Esophagus squamous epithelium (tissue), 5 donors: ENCODE measurements at regions of chr2 and their contacts with region 1.

Region 1: DNA sequence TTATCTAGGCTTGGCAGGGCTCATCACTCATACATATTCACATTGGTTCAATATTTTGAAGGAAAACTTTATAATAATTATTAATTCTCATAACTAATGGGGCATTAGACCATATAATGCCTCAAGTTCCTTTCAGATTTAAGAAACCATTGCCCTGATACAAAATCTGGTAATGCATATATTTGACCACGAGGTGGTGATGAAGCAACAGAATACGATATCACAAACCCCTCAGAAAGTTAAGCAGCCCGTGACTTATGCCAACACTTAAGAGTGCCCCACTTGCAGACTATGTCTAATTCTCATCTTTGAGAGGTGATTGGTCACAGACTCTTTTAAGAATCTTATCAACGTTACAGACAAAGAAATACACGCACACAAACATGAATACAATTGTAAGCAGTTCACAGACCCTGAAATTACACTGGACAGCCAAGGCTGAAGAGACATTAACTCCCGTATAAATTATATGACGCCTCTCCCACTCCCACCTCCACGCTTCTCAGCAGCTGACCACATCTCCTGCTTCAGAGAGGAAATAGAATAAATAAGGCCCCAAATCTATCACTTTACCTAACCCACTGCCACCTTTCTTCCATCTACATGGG is 20.7 kb upstream of the DNAH6 start:
- DNase-seq: no peak
- H3K4me3 ChIP-seq: no peak overlapping the region
- H3K27ac ChIP-seq: no peak overlapping the region
- H3K4me1 ChIP-seq: no peaks in the 10 kb centered on the region
- H3K27me3 ChIP-seq: no peaks in the 10 kb centered on the region
- CTCF ChIP-seq: peak; percentile 48 to 78 (median 56)
- POLR2A ChIP-seq: no peak

Region 2: GRCh38 chr2:83887757-83888156 is 607.9 kb before region 1 on chr2:
- intact Hi-C with region 1: no loop called
- DNase-seq: no peak
- H3K4me3 ChIP-seq: no peak overlapping the region
- H3K27ac ChIP-seq: no peak overlapping the region
- H3K4me1 ChIP-seq: no peaks in the 10 kb centered on the region
- H3K27me3 ChIP-seq: no peaks in the 10 kb centered on the region
- CTCF ChIP-seq: no peak
- POLR2A ChIP-seq: no peak

Region 3: GRCh38 chr2:84212611-84213314 is 282.9 kb before region 1 on chr2:
- intact Hi-C with region 1: no loop called
- DNase-seq: no peak
- H3K4me3 ChIP-seq: no peak overlapping the region
- H3K27ac ChIP-seq: no peak overlapping the region
- H3K4me1 ChIP-seq: no peaks in the 10 kb centered on the region
- H3K27me3 ChIP-seq: no peaks in the 10 kb centered on the region
- CTCF ChIP-seq: no peak
- POLR2A ChIP-seq: no peak

Region 4: DNA sequence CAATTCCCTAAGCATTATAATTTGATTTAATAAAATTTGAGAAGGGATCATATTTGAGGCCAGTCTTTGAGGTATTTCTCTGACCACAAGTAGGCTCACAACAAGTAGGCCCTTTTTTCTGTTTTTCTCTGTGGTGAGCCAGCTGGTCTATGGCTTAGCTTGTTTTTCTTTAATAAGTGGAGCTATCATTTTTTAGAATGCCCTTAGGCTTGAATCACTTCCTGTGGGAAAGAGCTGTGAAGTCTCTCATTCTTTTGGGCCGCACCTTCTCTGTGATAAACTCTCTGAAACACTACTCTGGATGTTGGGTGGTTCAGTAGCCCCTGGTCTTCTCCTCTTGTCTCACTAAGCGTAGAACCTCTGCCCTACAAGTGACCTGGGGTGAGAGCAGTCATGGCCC is 272.5 kb before region 1 on chr2:
- intact Hi-C with region 1: no loop called
- DNase-seq: no peak
- H3K4me3 ChIP-seq: no peak overlapping the region
- H3K27ac ChIP-seq: no peak overlapping the region
- H3K4me1 ChIP-seq: no peaks in the 10 kb centered on the region
- H3K27me3 ChIP-seq: no peaks in the 10 kb centered on the region
- CTCF ChIP-seq: no peak
- POLR2A ChIP-seq: no peak

Region 5: GRCh38 chr2:84613082-84613481 is 117.4 kb after region 1 on chr2:
- intact Hi-C with region 1: no loop called
- DNase-seq: no peak
- H3K4me3 ChIP-seq: no peak overlapping the region
- H3K27ac ChIP-seq: no peak overlapping the region
- H3K4me1 ChIP-seq: no peaks in the 10 kb centered on the region
- H3K27me3 ChIP-seq: no peaks in the 10 kb centered on the region
- CTCF ChIP-seq: no peak
- POLR2A ChIP-seq: no peak

Region 6: DNA sequence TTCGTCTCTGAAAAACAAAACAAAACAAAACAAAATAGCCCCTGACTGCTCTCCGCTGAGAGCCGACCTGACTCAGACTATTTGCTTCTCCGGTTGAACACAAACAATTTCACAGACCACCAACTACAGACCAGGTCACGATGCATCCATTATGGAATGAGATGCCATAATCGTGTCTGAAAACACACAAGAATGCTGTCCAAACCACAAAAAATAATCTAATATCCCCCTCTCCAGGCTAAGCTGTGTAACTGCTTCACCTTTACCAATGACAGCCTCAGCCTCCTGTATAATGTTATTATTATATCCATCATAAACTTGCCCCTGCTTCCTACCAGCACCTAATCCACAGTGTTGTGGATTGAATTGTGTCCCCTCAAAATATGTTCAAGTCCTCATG is 135.4 kb after region 1 on chr2:
- intact Hi-C with region 1: loop called (anchors 10 kb)
- DNase-seq: no peak
- H3K4me3 ChIP-seq: no peak overlapping the region
- H3K27ac ChIP-seq: no peak overlapping the region
- H3K4me1 ChIP-seq: no peaks in the 10 kb centered on the region
- H3K27me3 ChIP-seq: no peaks in the 10 kb centered on the region
- CTCF ChIP-seq: peak in 5 of 6 experiments; percentile 28 to 60 (median 33)
- POLR2A ChIP-seq: no peak

Region 7: GRCh38 chr2:84881581-84882414 is 386.2 kb after region 1 on chr2:
- intact Hi-C with region 1: loop called (anchors 10 kb)
- DNase-seq: peak; percentile 28
- H3K4me3 ChIP-seq: peak overlapping the region; percentile 11 to 76 (median 52)
- H3K27ac ChIP-seq: peak overlapping the region in 1 of 4 donors; percentile 39
- H3K4me1 ChIP-seq: peaks cover 9 to 33% (median 20%) of the 10 kb centered on the region in 3 donors
- H3K27me3 ChIP-seq: peaks cover 0 to 73% (median 11%) of the 10 kb centered on the region in 4 donors
- CTCF ChIP-seq: peak; percentile 67 to 77 (median 74)
- POLR2A ChIP-seq: no peak

Region 8: GRCh38 chr2:84925724-84926376 is 430.2 kb after region 1 on chr2:
- intact Hi-C with region 1: loop called (anchors 10 kb)
- DNase-seq: peak; percentile 76
- H3K4me3 ChIP-seq: peak overlapping the region in 3 of 4 donors; percentile 37 to 56 (median 44)
- H3K27ac ChIP-seq: peak overlapping the region; percentile 26 to 81 (median 58)
- H3K4me1 ChIP-seq: peaks cover 18 to 38% (median 26%) of the 10 kb centered on the region in 3 donors
- H3K27me3 ChIP-seq: no peaks in the 10 kb centered on the region
- CTCF ChIP-seq: peak; percentile 94 to 99 (median 98)
- POLR2A ChIP-seq: no peak